Activated T-helper 2 cell treated with anti-CD3 and anti-CD28 coated beads, Interferon-gamma antibody, Interleukin-2, Interleukin-4, amounts not matched to agents 10 μg/mL and 5 μg/mL and 100 μg/mL, durations not matched to agents 14 hours and 24 hours and 36 hours (primary cell): ENCODE measurements at regions of chr2 and their contacts with region 1.

Region 1: DNA sequence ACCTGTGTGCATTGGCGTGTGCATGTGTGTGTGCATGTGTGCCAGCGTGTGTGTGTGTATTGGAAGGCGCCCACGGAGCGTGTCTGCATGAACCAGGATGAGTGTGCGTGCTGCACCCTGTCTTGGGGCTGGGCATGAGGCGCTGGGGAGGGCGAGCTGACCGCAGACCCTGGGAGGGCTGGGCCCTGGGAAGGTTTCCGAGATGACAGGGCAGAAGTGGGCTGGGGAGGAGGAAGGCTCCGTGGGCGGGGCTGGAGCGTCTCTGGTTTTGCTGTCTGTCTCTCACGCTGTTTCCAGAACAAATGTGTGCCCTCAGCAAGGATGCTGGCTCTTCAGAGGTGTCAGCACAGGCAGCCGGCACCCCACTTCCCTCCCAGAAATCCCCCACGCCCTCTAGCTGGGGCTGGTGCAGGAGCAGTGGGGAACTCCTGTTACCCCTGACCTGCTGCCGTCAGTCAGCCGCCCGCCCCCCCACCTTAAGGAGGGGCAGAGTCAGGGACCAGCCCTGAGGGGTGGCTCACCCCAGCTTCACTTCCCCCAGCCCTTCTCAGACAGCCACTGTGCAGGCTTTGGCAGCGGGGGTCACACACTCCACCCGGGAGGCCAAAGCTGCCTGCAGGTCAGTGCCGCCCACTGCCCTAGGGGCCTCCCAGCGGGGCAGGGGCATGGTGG is at the start of gene GPR35:
- DNase-seq: peak; percentile 79
- H3K4me3 Mint-ChIP-seq: peak within 1 kb of the TSS; percentile 79
- H3K27ac Mint-ChIP-seq: peak within 1 kb of the TSS; percentile 85
- H3K4me1 Mint-ChIP-seq: peaks cover 47% of the 10 kb centered on the region
- H3K27me3 Mint-ChIP-seq: no peaks in the 10 kb centered on the region
- total RNA-seq, gene GPR35: 24.9 and 27.4 TPM in 2 replicates

Region 2: DNA sequence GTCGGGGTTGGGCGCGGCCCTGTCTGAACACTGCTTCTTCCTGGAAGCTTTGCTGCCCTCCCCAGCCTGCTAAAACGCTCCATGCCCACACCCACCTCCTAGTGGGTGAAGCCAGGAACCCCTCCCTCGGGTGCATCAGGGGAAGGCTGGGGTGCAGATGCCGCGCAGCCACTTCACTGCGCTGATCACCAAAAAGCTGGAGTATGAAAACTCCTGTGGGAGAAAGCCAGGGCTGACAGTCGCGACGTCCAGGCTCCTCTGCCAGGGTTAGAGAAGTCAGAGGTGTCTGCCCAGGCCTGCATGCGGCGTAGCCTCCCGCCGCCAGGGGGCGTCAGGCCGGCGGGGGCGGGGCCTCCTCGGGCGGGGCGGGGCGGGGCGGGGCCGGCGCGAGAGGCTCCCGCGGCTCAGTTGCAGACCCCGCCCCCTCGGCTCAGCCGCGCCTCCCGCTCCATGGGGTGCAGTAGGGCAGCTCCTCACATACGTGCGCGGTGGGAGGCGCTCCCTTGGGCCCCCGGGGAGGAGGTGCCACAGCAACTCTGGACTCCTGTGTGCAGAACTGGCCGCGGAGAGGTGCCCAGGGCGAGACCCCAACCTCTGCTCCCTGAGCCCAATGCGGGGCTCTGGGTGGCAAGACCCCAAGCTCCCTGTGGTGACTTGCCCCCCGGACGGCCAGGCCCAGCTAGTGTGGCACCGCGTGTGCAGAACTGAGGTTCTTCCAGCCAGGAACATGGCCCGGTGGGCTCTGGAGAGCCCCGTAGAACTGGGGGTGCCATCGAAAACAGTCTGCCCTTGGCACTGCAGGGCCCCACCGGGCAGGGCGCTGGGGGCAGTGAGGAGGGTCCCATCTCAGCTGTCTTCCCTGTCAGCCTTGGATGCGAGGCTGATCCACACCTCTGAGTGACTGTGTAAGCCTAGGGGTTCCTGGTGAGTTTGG is 58.6 kb before region 1 on chr2:
- intact Hi-C with region 1: loop called (anchors 1 kb)
- DNase-seq: peak; percentile 93
- H3K4me3 Mint-ChIP-seq: peak overlapping the region; percentile 94
- H3K27ac Mint-ChIP-seq: peak overlapping the region; percentile 97
- H3K4me1 Mint-ChIP-seq: peaks cover 61% of the 10 kb centered on the region
- H3K27me3 Mint-ChIP-seq: no peaks in the 10 kb centered on the region

Region 3: DNA sequence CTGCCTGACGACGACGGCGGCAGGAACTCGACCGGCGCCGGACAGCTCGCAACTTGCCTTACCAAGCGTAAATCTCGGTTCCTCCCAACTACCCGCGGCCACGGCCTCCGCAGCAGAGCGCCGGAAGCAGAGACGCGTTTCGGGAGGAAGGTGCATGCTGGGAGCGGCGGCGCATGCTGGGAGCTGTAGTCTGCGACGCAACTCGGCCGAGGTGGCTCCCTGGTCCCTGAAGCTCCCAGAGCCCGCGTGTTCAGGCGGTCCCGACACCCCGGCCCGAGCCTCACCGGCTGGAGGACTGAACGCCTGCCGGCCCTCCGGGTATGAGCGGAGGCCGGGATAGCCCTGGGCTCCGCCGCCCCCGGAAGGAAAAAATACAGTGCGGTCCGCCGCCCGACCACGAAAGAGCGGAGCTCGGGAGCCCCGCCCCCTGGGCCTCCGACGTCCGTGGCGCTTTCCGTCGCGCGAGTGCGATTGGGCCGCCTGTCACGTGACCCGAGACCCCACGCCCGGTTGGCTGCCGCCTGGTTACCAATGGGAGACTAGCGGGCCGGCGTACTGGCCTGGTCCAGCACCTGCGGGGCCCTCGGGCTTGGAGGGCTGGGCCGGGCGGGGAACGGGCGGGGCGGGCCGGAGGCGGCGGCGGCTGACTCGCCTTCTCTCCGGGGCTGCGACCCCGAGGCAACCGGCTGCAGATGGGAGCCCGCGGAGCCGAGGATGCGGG is 38.7 kb before region 1 on chr2 and contains the start of gene CAPN10:
- intact Hi-C with region 1: loop called (anchors 1 kb)
- DNase-seq: peak; percentile 97
- H3K4me3 Mint-ChIP-seq: peak within 1 kb of the TSS; percentile 97
- H3K27ac Mint-ChIP-seq: peak within 1 kb of the TSS; percentile 91
- H3K4me1 Mint-ChIP-seq: peaks cover 27% of the 10 kb centered on the region
- H3K27me3 Mint-ChIP-seq: no peaks in the 10 kb centered on the region
- total RNA-seq, gene CAPN10: 49.6 and 51.1 TPM in 2 replicates

Region 4: DNA sequence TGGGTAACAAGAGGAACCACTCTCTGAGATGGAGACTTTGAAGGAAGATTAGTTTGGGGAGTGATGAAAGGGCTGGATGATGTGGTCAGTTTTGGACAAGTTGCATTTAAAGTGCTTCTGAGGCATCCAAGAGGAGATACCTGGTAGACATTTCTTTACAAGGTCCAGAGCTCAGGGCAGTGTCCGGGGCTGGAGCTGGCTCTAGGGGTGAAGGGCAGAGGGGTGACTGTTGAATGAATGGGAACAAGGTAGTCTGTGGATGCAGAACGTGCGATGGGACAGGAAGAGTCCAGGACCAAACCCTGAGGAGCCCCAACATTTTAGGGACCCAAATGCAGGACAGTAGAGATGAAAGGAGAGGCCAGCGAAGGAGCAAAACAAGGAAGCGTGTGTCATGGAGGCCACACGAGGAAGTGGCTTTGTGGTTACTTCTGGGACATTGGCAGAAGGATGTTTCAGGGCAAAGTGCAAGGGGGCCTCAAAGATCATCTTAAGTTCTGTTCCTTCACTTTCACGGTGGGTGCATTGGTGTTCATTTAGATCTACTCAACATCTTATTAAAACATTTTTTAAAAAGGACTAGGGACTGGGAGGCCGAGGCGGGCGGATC is 13.4 kb before region 1 on chr2:
- intact Hi-C with region 1: loop called (anchors 1 kb)
- DNase-seq: no peak
- H3K4me3 Mint-ChIP-seq: peak overlapping the region; percentile 64
- H3K27ac Mint-ChIP-seq: peak overlapping the region; percentile 85
- H3K4me1 Mint-ChIP-seq: peaks cover 20% of the 10 kb centered on the region
- H3K27me3 Mint-ChIP-seq: no peaks in the 10 kb centered on the region

Region 5: DNA sequence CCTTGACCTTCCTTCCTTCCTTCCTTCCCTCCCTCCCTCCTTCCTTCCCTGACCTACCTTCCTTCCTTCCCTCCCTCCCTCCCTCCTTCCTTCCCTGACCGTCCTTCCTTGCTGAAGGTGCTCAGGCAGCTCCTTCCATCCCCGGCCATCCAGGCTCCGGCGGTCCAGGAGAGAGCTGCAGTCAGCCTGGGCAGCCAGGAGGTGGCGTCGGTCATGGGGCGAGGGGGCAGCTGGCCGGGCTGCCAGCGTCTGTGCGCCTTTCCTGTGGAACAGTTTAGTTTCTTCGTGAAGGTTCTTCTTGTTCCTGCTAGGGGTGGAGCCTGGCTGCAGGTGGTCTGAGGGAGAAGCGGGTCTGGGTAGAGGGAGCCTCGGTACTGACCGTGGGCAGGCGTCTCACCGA is 15.9 kb after region 1 on chr2:
- intact Hi-C with region 1: no loop called
- DNase-seq: peak; percentile 7
- H3K4me3 Mint-ChIP-seq: no peak overlapping the region
- H3K27ac Mint-ChIP-seq: no peak overlapping the region
- H3K4me1 Mint-ChIP-seq: peaks cover under 1% of the 10 kb centered on the region
- H3K27me3 Mint-ChIP-seq: no peaks in the 10 kb centered on the region